ENCODE measurements at regions of chr12 and their contacts with region 1.

Region 1: DNA sequence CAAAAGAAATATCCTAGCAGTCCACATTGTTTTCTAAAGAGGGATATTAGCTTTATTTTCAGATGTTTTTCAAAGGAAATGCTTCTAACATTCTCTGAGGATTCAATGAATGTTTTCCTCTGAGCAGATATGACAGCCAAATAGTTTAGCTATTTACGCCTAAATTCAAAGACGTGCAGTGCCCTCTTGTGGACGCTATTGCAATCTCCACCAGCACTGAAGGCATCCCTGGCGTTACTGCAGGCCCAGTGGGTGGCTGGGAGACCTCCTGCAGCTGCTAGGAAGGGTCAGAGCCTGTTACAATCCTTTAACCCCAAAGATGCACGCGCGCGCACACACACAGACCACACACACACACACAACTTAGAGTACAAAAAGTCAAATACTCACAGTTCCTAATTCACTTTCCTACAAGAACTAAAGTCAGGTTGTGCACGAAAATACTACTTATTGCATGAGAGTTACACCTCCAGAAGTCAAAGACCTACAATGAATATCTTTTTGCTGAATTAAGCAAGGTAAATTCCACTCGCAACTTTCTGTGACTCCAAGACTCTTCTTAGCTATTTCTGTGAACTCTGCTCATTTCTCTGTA is 589.3 kb upstream of the TMEM132C start:
- DNase-seq: peak; percentile 73
- H3K4me3 Mint-ChIP-seq: no peak overlapping the region
- H3K27ac Mint-ChIP-seq: no peak overlapping the region
- H3K4me1 Mint-ChIP-seq: no peaks in the 10 kb centered on the region
- H3K27me3 Mint-ChIP-seq: no peaks in the 10 kb centered on the region

Region 2: DNA sequence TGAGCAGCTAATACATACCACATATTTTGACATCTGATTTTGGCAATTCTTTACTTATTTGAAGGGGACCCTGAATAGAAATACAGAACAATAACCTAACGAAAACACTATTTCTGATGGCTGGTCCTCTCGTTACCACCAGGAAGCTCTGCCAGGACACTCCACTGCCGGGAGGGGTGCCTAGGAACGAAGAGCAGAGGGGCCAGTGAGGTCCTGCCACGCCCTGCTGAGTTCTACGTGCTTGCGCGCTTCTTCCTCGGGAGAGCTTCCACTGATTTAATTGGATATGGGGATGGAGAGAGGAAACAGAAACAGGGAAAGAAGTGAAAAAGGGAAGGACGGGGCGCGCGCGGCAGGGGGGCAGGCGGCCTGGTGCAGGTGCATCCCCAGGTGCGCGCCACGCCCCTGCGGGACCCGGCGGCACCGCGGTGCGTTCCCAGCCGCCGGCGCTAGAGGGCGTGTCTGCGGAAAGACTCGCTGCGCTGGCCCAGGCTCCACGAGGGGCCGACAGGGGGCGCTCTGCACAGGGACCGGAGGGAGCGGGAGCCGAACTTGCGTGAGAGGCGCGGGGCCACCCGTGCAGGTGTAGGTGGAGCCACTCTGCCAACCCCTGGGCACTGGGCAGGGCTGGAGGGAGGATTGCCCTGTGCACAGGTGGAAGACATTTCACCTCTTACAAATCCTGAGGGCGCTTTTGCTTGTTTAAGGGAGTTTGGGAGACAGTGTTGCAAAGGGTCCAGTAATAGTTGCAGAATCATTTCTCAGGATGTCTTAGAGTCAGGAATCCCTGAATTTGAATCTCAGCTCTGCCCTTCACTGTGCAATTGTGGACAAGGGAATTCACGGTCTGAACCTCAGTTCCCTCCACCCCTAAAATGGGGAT is 397.0 kb before region 1 on chr12:
- CTCF ChIA-PET with region 1: no interaction called
- intact Hi-C with region 1: loop called (anchors 5 kb)
- DNase-seq: peak; percentile 77
- H3K4me3 Mint-ChIP-seq: no peak overlapping the region
- H3K27ac Mint-ChIP-seq: no peak overlapping the region
- H3K4me1 Mint-ChIP-seq: no peaks in the 10 kb centered on the region
- H3K27me3 Mint-ChIP-seq: peaks cover 25% of the 10 kb centered on the region

Region 3: DNA sequence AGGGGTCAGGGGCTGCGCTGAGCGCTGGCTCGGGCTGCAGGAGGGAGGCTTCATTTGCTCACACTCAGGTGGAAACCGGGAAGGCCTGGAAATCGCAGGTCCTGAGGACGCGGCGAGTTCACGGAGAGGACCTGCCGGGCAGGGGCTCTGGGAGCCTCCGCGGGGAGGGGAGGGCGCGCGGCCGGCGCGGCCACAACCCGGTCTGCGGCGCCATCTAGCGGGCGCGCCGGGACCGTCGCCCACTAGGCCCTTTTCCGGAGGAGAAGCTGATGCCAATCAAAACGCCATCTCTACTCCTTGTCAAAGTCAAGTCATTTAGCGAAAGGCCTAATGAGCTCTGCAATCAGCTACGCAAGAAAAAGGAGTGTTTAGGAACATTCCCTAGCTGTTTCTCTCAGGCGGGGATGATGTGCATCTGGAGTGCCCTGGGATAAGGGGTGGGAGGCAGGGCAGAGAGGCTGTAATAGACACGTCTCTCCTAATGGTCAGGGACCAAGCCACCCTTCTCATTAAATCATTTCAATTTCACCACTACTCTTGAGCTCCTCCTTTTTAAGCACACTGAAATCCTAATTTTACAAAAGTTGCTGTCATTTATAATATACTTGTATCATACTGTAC is 296.5 kb before region 1 on chr12:
- CTCF ChIA-PET with region 1: interaction called, 3 read pairs
- intact Hi-C with region 1: loop called (anchors 5 kb)
- DNase-seq: peak; percentile 31
- H3K4me3 Mint-ChIP-seq: no peak overlapping the region
- H3K27ac Mint-ChIP-seq: no peak overlapping the region
- H3K4me1 Mint-ChIP-seq: peaks cover 2% of the 10 kb centered on the region
- H3K27me3 Mint-ChIP-seq: peaks cover 9% of the 10 kb centered on the region

Region 4: GRCh38 chr12:127416796-127417195 is 260.8 kb before region 1 on chr12:
- CTCF ChIA-PET with region 1: no interaction called
- intact Hi-C with region 1: no loop called
- DNase-seq: no peak
- H3K4me3 Mint-ChIP-seq: no peak overlapping the region
- H3K27ac Mint-ChIP-seq: no peak overlapping the region
- H3K4me1 Mint-ChIP-seq: no peaks in the 10 kb centered on the region
- H3K27me3 Mint-ChIP-seq: peaks cover 4% of the 10 kb centered on the region

Region 5: GRCh38 chr12:127485528-127485927 is 192.1 kb before region 1 on chr12:
- CTCF ChIA-PET with region 1: interaction called, 3 read pairs
- intact Hi-C with region 1: loop called (anchors 1 kb)
- DNase-seq: peak; percentile 66
- H3K4me3 Mint-ChIP-seq: no peak overlapping the region
- H3K27ac Mint-ChIP-seq: no peak overlapping the region
- H3K4me1 Mint-ChIP-seq: no peaks in the 10 kb centered on the region
- H3K27me3 Mint-ChIP-seq: peaks cover 2% of the 10 kb centered on the region

Region 6: GRCh38 chr12:127770118-127770517 is 92.5 kb after region 1 on chr12:
- CTCF ChIA-PET with region 1: no interaction called
- intact Hi-C with region 1: no loop called
- DNase-seq: no peak
- H3K4me3 Mint-ChIP-seq: no peak overlapping the region
- H3K27ac Mint-ChIP-seq: no peak overlapping the region
- H3K4me1 Mint-ChIP-seq: no peaks in the 10 kb centered on the region
- H3K27me3 Mint-ChIP-seq: peaks cover 3% of the 10 kb centered on the region

Region 7: GRCh38 chr12:128069359-128069997 is 391.8 kb after region 1 on chr12:
- CTCF ChIA-PET with region 1: no interaction called
- intact Hi-C with region 1: loop called (anchors 5 kb)
- DNase-seq: peak; percentile 43
- H3K4me3 Mint-ChIP-seq: no peak overlapping the region
- H3K27ac Mint-ChIP-seq: no peak overlapping the region
- H3K4me1 Mint-ChIP-seq: no peaks in the 10 kb centered on the region
- H3K27me3 Mint-ChIP-seq: no peaks in the 10 kb centered on the region

Measured in activated naive CD4-positive, alpha-beta T cell treated with anti-CD3 and anti-CD28 coated beads for 36 hours (primary cell).